ENCODE measurements at regions of chr1 and their contacts with region 1.

Region 1: DNA sequence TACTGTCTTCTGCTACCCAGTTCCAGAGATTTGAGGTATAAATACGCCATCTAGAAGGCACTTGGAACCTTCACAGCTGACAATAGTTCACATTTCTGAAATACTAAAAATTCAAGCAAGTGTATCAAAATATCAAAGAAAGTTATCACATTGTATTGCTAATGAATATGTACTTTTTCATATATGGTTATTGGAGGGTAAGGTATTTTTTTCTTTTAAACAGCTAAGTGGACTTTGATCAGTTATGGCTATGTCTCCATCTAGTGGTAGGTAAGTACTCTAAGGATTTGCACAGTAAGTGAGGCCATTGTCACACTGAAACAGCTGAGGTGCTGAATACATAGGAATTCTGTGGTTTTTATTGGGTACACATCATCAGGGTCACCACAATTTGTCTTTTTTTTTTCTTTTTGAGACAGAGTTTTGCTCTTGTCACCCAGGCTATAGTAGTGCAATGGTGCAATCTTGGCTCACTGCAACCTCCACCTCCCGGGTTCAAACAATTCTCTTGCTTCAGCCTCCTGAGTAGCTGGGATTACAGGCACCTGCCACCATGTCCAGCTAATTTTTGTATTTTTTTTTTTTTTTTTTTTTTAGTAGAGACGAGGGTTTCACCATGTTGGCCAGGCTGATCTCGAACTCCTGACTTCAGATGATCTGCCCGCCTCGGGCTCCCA is 49.1 kb upstream of the CR2 start:
- H3K4me3 ChIP-seq: no peak overlapping the region
- H3K27ac ChIP-seq: no peak overlapping the region
- H3K4me1 ChIP-seq: no peaks in the 10 kb centered on the region
- CTCF ChIP-seq: peak; percentile 63

Region 2: DNA sequence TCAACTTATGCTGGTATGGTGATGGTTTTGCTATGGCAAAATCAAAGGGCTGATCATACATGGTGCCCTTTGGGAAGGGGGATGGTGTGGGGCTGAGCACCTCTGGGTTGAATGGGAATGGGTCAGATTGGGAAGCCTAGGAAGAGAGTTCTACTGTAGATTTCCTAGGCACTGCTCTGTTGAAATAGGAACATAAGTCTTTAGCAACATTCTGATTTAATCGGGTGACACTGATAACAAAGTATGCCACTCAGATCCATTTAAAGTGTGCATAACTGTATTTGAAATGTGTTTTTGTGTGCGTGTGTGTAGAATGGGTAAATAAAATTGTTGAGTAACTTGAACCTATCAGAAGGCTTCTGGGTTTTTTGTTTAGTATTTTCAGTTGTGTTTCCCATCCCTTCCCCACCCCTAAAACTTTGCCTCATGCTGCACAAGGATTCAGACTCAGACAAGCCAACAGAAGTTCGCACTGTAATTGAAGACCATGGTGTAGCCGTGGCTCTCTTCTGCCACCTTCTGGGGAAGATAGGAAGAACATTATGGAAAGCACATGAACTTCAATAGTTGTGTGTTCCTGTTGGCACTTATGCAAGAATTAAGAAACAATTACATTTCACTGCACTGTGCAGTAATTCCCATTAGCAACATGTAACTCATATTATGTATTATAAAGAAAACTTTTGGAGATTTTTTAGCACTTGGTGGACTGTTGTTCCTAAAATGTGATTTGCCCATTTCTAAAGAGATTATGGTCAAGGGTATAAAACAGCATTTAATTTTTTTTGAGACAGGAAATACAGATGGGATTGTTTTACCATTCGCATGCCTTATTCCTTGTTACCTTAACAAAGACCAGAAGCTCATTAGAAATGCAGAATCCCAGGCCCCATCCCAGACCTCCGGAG is 327.3 kb before region 1 on chr1:
- CTCF ChIA-PET with region 1: interaction called, 42 read pairs
- POLR2A ChIA-PET with region 1: no interaction called
- H3K4me3 ChIP-seq: no peak overlapping the region
- H3K27ac ChIP-seq: no peak overlapping the region
- H3K4me1 ChIP-seq: no peaks in the 10 kb centered on the region
- CTCF ChIP-seq: peak; percentile 68; the same call in 1 of the 2 replicates

Region 3: GRCh38 chr1:207084701-207085180 is 320.2 kb before region 1 on chr1:
- CTCF ChIA-PET with region 1: interaction called, 42 read pairs
- POLR2A ChIA-PET with region 1: no interaction called
- H3K4me3 ChIP-seq: no peak overlapping the region
- H3K27ac ChIP-seq: no peak overlapping the region
- H3K4me1 ChIP-seq: no peaks in the 10 kb centered on the region
- CTCF ChIP-seq: peak; percentile 60

Region 4: GRCh38 chr1:207259391-207259790 is 145.6 kb before region 1 on chr1:
- CTCF ChIA-PET with region 1: interaction called, 27 read pairs
- POLR2A ChIA-PET with region 1: interaction called, 4 read pairs
- H3K4me3 ChIP-seq: no peak overlapping the region
- H3K27ac ChIP-seq: no peak overlapping the region
- H3K4me1 ChIP-seq: no peaks in the 10 kb centered on the region
- CTCF ChIP-seq: no peak

Region 5: DNA sequence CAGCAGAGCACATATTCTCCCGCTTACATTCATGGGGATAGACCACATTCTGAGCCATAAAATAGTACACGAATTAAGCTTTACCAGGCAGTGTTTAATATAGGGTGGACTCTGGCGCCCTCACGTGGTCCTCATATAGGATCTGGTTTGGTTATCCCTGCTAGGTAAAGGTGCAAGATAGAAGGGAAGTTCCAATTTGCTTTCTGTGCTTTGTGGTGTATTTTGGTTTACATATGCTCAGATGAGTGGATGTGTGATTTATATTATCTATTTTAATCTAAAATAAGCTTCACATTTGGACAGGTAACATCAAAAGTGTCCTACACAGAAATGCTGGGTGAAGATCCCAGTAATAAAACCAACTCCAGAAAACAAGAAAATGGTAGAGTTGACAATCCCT is 94.6 kb after region 1 on chr1:
- CTCF ChIA-PET with region 1: interaction called, 11 read pairs
- POLR2A ChIA-PET with region 1: no interaction called
- H3K4me3 ChIP-seq: no peak overlapping the region
- H3K27ac ChIP-seq: no peak overlapping the region
- H3K4me1 ChIP-seq: no peaks in the 10 kb centered on the region
- CTCF ChIP-seq: 0 out of 2 replicates have a peak, but pooled peaks have one; percentile 56

Measured in HEK293 (cell line).